ENCODE measurements at regions of chr13 and their contacts with region 1.

Region 1: DNA sequence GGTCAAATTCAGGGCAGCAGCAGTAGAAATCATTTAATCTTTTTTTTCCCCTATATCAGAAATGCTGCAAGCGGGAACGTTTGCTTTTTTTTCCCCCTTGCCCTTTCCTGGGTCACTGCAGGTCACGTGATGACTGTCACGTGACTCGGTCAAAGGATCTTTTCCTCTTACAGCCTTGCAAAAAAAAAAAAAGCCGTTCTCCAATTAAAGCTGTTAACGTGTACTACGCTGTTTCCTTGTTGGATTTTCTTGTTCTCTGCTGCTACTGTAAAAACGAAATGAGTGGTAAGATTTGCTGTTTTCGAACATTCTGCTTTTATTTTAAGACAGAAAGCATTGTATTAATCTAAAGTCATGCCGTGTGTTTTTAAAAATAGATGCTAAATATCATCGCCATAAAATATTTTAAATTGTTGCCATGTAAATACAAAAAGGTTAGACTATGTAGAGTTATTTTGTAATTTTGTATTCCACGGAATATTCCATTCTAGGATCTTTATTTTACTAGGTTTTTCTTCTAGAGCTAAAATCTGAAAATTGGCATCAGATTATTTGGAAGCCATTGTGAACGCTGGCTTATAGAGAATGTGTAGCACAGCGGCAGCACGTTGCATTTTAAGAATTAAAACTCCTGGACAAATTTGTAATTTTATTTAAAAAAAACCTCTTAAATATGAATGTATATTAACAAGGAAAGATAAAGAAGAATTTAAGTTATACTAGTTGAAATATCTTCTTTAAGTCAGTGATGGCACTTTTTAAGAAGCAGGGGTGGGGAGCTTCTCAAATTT is 109.8 kb upstream of the MLNR start:
- DNase-seq: peak; percentile 71 to 82
- ATAC-seq: peak; percentile 94 to 95
- H3K4me3 ChIP-seq: peak overlapping the region; percentile 50 to 72 (median 68)
- H3K27ac ChIP-seq: peak overlapping the region; percentile 69 to 81 (median 73)
- H3K4me1 ChIP-seq: peaks cover 33 to 37% of the 10 kb centered on the region in 2 donors
- H3K27me3 ChIP-seq: no peaks in the 10 kb centered on the region
- CTCF ChIP-seq: peak in 1 of 5 experiments; percentile 36
- POLR2A ChIP-seq: peak in 1 of 2 donors; percentile 15

Region 2: GRCh38 chr13:48975856-48976575 is 134.3 kb before region 1 on chr13 and contains the start of gene FNDC3A:
- in situ Hi-C with region 1: loop called in 1 of 4 experiments (anchors 10 kb)
- intact Hi-C with region 1: loop called (anchors 5 kb)
- DNase-seq: peak; percentile 63 to 70
- ATAC-seq: peak; percentile 83 to 86
- H3K4me3 ChIP-seq: peak within 1 kb of the TSS; percentile 88 to 96 (median 92)
- H3K27ac ChIP-seq: peak within 1 kb of the TSS; percentile 98 to 99 (median 98)
- H3K4me1 ChIP-seq: peaks cover 18 to 28% of the 10 kb centered on the region in 2 donors
- H3K27me3 ChIP-seq: no peaks in the 10 kb centered on the region
- CTCF ChIP-seq: peak in 1 of 5 experiments; percentile 33
- POLR2A ChIP-seq: peak; percentile 31 to 60
- total RNA-seq, gene FNDC3A: 9.6 to 18.3 (median 10.4) TPM

Region 3: DNA sequence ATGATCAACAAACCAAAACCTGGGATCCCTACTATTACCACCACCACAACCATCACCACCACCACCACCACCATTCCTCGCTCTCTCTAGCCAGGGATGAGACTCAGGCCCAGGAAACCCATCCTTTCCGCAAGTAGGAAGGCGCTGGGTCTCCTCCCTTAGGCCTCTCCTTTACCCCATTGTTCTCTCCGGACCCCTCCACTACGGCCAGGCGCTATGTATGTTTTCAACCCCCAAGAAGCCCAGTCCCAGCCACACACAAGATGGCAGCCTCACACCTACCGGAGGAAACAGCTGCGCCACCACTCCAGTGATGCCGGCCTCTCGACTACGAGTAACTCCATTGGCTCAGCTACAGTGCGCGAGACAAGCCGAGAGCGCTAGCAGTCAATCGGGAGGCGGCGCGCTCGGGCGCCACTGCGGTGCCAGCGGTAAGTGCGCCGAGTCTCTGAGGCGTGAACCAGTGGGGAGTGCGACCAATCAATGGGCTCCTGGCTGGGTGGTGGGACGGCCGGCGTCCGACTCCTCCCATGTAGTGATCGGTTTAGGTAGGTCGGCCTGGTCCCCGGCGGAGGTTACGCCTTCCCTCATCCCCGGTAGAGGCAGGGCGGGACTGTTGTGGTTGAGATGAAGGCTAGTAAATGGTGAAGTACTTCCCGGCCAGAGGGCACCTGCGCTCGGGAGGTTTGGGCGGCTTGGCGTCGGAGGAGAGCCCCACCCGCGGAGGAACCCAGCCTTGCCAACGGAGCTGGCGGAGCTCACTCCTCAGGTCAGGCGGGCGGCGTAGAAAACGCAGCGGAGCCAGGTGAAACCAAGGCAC is 333.6 kb after region 1 on chr13 and contains the starts of genes CAB39L and SETDB2:
- in situ Hi-C with region 1: loop called in 1 of 4 experiments (anchors 25 kb)
- intact Hi-C with region 1: no loop called
- DNase-seq: peak; percentile 98
- ATAC-seq: peak; percentile 91 to 94
- H3K4me3 ChIP-seq: peak within 1 kb of the TSS; percentile 77 to 83 (median 81)
- H3K27ac ChIP-seq: peak within 1 kb of the TSS; percentile 84 to 93 (median 87)
- H3K4me1 ChIP-seq: peaks cover 9 to 20% of the 10 kb centered on the region in 2 donors
- H3K27me3 ChIP-seq: no peaks in the 10 kb centered on the region
- CTCF ChIP-seq: peak in 3 of 5 experiments; percentile 27 to 52 (median 46)
- POLR2A ChIP-seq: peak; percentile 58 to 89
- total RNA-seq, gene CAB39L: 4.7 to 14.4 (median 8.7) TPM
- total RNA-seq, gene SETDB2: 1.7 to 6.2 (median 4.6) TPM